ENCODE measurements at regions of chr22 and their contacts with region 1.

Region 1: GRCh38 chr22:41940832-41941765 is 5.9 kb downstream of the CENPM start:
- DNase-seq: peak; percentile 85
- H3K4me3 ChIP-seq: no peak overlapping the region
- H3K27ac ChIP-seq: peak overlapping the region in 1 of 2 donors; percentile 39
- H3K4me1 ChIP-seq: peaks cover 0 to 4% of the 10 kb centered on the region in 2 donors
- H3K27me3 ChIP-seq: no peaks in the 10 kb centered on the region
- CTCF ChIP-seq: peak; percentile 86 to 99 (median 92)
- POLR2A ChIP-seq: no peak

Region 2: DNA sequence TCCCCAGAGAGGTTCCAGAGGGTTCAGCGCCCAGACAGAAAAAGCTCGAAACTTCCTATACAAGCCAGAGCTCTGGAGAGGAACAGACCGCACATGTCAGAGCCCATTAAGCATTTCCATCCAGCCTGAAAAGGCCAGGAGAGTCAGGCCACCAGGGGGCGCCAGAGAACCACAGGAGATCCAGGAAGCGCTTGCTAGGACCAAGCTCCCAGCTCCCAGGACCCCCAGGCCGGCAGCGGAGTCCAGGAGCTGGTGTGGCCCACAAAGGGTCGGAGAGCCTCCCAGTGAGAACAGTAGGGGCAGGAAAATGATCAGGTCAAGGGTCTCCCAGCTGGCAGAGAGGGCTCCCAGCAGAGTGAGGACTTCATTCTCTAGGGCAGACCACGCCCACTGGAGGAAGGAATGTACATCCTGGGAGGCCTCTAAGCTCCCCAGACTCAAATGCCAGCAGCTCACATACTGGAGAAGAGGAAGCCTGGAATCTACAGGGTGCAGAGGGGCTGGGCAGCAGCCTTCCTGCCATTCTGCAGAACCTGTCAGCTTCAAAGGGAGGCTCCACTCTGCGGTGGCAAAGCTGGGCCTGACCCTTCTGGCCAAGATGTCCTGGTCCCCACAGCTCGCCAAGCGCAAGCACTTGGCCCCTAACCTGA is 243.8 kb before region 1 on chr22:
- intact Hi-C with region 1: loop called (anchors 5 kb)
- DNase-seq: peak; percentile 90 to 92
- H3K4me3 ChIP-seq: peak overlapping the region in 1 of 2 donors; percentile 12
- H3K27ac ChIP-seq: peak overlapping the region; percentile 10 to 30
- H3K4me1 ChIP-seq: peaks cover 0 to 7% of the 10 kb centered on the region in 2 donors
- H3K27me3 ChIP-seq: no peaks in the 10 kb centered on the region
- CTCF ChIP-seq: peak; percentile 90 to 98 (median 96)
- POLR2A ChIP-seq: no peak

Region 3: DNA sequence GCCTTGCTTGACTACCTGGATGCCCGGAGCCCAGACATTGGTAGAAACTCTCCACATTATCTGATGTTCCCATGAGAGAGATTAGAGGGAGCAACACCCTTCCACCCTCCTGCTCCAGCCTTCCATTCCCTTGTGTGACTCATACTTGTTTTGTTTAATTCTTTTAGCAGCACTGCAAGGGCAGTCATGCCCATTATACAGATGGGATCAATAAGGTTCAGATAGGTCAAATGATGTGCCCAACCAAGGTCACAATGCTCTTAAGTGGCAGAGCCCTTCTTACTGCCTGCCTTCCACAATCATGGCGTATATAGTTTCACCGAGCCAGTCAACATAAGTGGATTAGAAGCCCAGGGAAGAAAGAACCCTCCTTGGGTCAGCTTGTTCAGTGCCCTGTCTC is 147.2 kb before region 1 on chr22:
- intact Hi-C with region 1: no loop called
- DNase-seq: no peak
- H3K4me3 ChIP-seq: no peak overlapping the region
- H3K27ac ChIP-seq: no peak overlapping the region
- H3K4me1 ChIP-seq: no peaks in the 10 kb centered on the region
- H3K27me3 ChIP-seq: no peaks in the 10 kb centered on the region
- CTCF ChIP-seq: no peak
- POLR2A ChIP-seq: no peak

Measured in uterus (tissue), 4 donors.